Activated CD8-positive, alpha-beta T cell treated with anti-CD3 and anti-CD28 coated beads, Interleukin-2, amount 10 ng/mL, durations not matched to agents 7 days and 5 days (primary cell): ENCODE measurements at regions of chr7 and their contacts with region 1.

Region 1: DNA sequence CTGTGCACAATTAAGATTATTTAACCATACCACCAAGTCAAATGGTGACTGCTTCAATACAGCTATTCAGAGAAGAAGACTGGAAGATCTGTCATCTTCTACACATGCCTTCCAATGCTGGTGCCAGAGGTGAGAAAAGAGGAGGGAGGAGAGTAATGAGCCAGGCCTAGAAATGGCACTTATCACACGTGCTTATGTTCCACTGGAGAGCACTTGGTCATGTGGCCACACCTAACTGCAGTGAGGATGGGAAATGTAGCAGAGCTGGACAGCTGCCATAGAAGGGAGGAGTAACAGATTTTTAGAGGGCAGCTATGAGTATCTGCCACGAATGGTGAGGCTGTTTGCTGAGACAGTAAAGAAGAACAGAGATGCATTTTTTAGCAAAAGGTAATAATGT is 77.1 kb downstream of the MPLKIP start:
- DNase-seq: no peak
- ATAC-seq: no peak
- H3K4me3 Mint-ChIP-seq: no peak overlapping the region
- H3K27ac Mint-ChIP-seq: no peak overlapping the region
- H3K4me1 Mint-ChIP-seq: peaks cover 3% of the 10 kb centered on the region
- H3K27me3 Mint-ChIP-seq: no peaks in the 10 kb centered on the region

Region 2: GRCh38 chr7:39948956-39949928 is 108.0 kb before region 1 on chr7:
- CTCF ChIA-PET with region 1: interaction called, 70 read pairs
- POLR2A ChIA-PET with region 1: interaction called, 4 read pairs
- DNase-seq: peak; percentile 98
- ATAC-seq: peak; percentile 75
- H3K4me3 Mint-ChIP-seq: peak overlapping the region; percentile 95
- H3K27ac Mint-ChIP-seq: peak overlapping the region; percentile 100
- H3K4me1 Mint-ChIP-seq: peaks cover 39% of the 10 kb centered on the region
- H3K27me3 Mint-ChIP-seq: no peaks in the 10 kb centered on the region

Region 3: DNA sequence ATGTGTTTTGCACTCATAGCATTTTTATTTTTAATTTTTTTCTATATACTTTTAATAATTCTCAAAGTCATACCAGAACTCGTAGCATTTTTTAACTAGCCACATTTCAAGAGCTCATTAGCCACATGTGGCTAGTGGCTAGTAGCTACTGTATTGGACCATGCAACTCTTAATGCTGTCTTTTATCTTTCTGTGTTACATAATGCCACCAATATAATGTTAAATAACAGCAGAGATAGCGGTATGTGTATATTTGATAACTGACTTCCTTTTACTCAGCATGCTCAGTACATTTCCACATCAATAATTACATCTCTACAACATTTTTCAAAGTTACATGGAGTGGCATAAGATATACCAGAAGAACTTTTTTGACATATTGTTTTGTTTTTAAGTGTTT is 15.8 kb before region 1 on chr7:
- CTCF ChIA-PET with region 1: interaction called, 13 read pairs
- POLR2A ChIA-PET with region 1: no interaction called
- DNase-seq: no peak
- ATAC-seq: no peak
- H3K4me3 Mint-ChIP-seq: no peak overlapping the region
- H3K27ac Mint-ChIP-seq: no peak overlapping the region
- H3K4me1 Mint-ChIP-seq: peaks cover 8% of the 10 kb centered on the region
- H3K27me3 Mint-ChIP-seq: no peaks in the 10 kb centered on the region

Region 4: DNA sequence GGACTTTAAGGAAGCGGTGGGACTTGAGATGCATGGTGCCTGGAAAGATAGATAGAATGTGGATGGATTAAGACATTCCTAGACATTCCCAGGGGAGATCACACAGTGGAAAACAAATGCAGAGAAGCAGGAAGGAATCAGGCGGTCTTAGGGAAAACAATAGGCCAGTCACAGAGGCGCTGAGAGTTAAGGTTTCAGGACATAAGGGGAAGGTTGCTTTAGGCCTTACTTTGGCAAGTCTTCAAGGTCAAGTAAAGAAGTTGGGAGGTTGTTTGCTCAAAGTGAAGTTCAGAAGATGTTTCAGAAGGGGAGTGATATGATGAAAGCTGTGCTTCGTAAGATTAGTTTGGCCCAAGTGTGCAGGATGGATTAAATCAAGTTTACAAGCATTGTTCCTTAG is 186.9 kb after region 1 on chr7:
- CTCF ChIA-PET with region 1: no interaction called
- POLR2A ChIA-PET with region 1: no interaction called
- DNase-seq: no peak
- ATAC-seq: no peak
- H3K4me3 Mint-ChIP-seq: no peak overlapping the region
- H3K27ac Mint-ChIP-seq: no peak overlapping the region
- H3K4me1 Mint-ChIP-seq: no peaks in the 10 kb centered on the region
- H3K27me3 Mint-ChIP-seq: no peaks in the 10 kb centered on the region